Caco-2 (cell line): ENCODE measurements at regions of chr6 and their contacts with region 1.

Region 1: DNA sequence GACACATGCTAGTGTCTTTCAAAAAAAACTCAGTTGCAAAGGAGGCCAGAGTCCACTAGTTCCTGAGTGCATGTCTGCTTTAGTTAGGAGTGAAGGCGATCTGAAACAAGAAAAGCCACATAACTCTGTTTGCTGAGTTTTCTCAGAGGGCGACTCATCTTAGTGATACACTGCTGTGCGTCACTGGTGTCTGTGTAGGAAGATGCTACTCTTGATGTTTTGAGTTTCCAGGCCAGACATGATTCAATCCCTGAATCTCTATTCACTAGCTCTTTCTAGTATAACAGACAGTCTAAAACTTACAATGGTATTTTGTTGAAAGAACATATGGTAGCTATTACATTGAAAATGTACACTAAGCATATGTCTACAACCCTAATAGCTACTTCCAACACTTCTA is 60.9 kb downstream of the GFRAL start:
- DNase-seq: peak; percentile 19 to 25
- H3K4me3 ChIP-seq: no peak overlapping the region
- H3K4me3 Mint-ChIP-seq: no peak overlapping the region
- H3K27ac Mint-ChIP-seq: no peak overlapping the region
- H3K4me1 ChIP-seq: peaks cover 9% of the 10 kb centered on the region; the same call in 1 of the 2 replicates
- H3K4me1 Mint-ChIP-seq: peaks cover 25% of the 10 kb centered on the region
- H3K27me3 ChIP-seq: no peaks in the 10 kb centered on the region
- H3K27me3 Mint-ChIP-seq: no peaks in the 10 kb centered on the region
- CTCF ChIP-seq: no peak

Region 2: GRCh38 chr6:55011034-55011433 is 377.2 kb before region 1 on chr6:
- CTCF ChIA-PET with region 1: no interaction called
- POLR2A ChIA-PET with region 1: no interaction called
- intact Hi-C with region 1: no loop called
- DNase-seq: no peak
- H3K4me3 ChIP-seq: no peak overlapping the region
- H3K4me3 Mint-ChIP-seq: no peak overlapping the region
- H3K27ac Mint-ChIP-seq: no peak overlapping the region
- H3K4me1 ChIP-seq: no peaks in the 10 kb centered on the region
- H3K4me1 Mint-ChIP-seq: no peaks in the 10 kb centered on the region
- H3K27me3 ChIP-seq: no peaks in the 10 kb centered on the region
- H3K27me3 Mint-ChIP-seq: peaks cover 5% of the 10 kb centered on the region
- CTCF ChIP-seq: no peak

Region 3: GRCh38 chr6:55286824-55287223 is 101.4 kb before region 1 on chr6:
- CTCF ChIA-PET with region 1: no interaction called
- POLR2A ChIA-PET with region 1: no interaction called
- intact Hi-C with region 1: loop called (anchors 10 kb)
- DNase-seq: no peak
- H3K4me3 ChIP-seq: no peak overlapping the region
- H3K4me3 Mint-ChIP-seq: no peak overlapping the region
- H3K27ac Mint-ChIP-seq: no peak overlapping the region
- H3K4me1 ChIP-seq: peaks cover 3% of the 10 kb centered on the region; the same call in 1 of the 2 replicates
- H3K4me1 Mint-ChIP-seq: no peaks in the 10 kb centered on the region
- H3K27me3 ChIP-seq: no peaks in the 10 kb centered on the region
- H3K27me3 Mint-ChIP-seq: no peaks in the 10 kb centered on the region
- CTCF ChIP-seq: no peak

Region 4: GRCh38 chr6:55319961-55320695 is 68.1 kb before region 1 on chr6:
- CTCF ChIA-PET with region 1: no interaction called
- POLR2A ChIA-PET with region 1: interaction called, 4 read pairs
- intact Hi-C with region 1: loop called (anchors 2 kb)
- DNase-seq: peak; percentile 75 to 81
- H3K4me3 ChIP-seq: no peak overlapping the region
- H3K4me3 Mint-ChIP-seq: peak overlapping the region; percentile 65
- H3K27ac Mint-ChIP-seq: peak overlapping the region; percentile 100
- H3K4me1 ChIP-seq: peaks cover 28% of the 10 kb centered on the region
- H3K4me1 Mint-ChIP-seq: peaks cover 32% of the 10 kb centered on the region
- H3K27me3 ChIP-seq: no peaks in the 10 kb centered on the region
- H3K27me3 Mint-ChIP-seq: no peaks in the 10 kb centered on the region
- CTCF ChIP-seq: no peak